Left colon (tissue), 2 donors: ENCODE measurements at regions of chr15 and their contacts with region 1.

Region 1: GRCh38 chr15:97903971-97904572 is 56.4 kb upstream of the ARRDC4 start:
- DNase-seq: peak; percentile 61 to 84
- ATAC-seq: peak; percentile 99

Region 2: DNA sequence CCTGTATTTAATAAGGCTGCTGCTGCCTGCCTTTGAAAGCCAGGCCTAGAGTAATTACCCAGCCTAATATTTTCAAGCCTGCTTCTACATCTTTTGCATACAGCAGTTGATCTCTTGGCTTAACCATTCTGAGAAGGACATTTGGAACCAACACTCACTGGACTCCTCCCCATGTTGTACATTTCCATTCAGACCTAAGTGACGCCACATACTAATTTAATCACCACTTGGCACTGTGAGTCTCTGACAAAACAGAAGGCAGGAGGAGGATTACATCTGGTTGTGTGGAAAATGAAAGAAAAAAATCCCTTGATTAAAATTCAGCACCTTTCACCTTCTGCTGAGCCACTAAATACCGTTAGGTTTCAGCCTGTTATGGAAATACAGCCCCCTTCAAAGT is 45.8 kb before region 1 on chr15:
- intact Hi-C with region 1: no loop called
- DNase-seq: no peak
- ATAC-seq: no peak

Region 3: GRCh38 chr15:98085003-98085639 is 181.0 kb after region 1 on chr15:
- intact Hi-C with region 1: loop called in 1 of 2 experiments (anchors 5 kb)
- DNase-seq: peak; percentile 29 to 34
- ATAC-seq: peak; percentile 54